ENCODE measurements at regions of chr19 and their contacts with region 1.

Region 1: DNA sequence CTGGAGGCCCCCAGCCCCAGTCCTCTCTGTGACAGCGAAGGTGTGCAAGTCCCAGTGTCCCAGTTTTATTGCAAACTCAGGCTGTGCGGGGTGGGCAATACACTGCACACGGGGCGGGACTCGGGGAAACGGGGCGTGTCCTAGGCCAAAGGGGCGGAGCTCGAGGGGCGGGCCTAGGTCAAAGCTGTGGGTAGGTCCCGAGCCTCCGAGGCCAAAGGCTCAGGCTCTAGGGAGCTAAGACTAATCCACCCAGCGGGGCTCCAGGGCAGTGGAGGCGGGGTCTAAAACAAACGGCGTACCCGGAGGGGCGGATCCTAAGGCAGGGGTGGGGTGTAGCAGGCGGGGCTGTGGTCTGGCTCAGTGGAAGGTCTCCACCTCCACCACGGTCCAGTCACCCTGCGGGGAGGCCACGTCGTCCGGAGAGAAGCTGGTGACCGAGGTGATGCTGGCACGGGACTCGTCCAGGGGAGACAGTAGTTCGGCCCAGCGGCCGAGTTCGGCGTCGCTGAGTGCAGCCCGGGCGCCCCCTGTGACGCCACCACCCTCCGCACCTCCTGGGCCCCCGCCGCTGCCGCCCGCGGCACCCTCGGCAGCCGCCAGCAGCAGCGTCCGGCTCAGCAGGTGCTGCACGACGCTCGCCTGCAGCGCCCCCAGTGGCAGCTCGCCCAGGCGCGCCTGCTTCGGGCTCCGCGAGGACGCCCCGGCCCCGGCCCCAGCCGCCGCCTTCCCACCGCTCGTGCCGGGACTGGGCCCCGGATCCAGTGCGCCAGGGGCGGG is 5.3 kb downstream of the PRR36 start:
- DNase-seq: peak; percentile 70 to 96 (median 82)
- ATAC-seq: peak; percentile 74 to 85 (median 83)
- H3K4me3 ChIP-seq: peak overlapping the region; percentile 58 to 59
- H3K4me3 Mint-ChIP-seq: peak overlapping the region; percentile 75 to 80 (median 76)
- H3K27ac ChIP-seq: peak overlapping the region; percentile 76
- H3K27ac Mint-ChIP-seq: peak overlapping the region; percentile 23 to 88
- H3K4me1 ChIP-seq: peaks cover 3 to 65% of the 10 kb centered on the region in 2 experiments
- H3K4me1 Mint-ChIP-seq: peaks cover 35 to 48% (median 37%) of the 10 kb centered on the region in 3 donors
- H3K27me3 ChIP-seq: peaks cover 0 to 75% of the 10 kb centered on the region in 2 experiments
- H3K27me3 Mint-ChIP-seq: peaks cover 17 to 24% of the 10 kb centered on the region in 2 donors

Region 2: DNA sequence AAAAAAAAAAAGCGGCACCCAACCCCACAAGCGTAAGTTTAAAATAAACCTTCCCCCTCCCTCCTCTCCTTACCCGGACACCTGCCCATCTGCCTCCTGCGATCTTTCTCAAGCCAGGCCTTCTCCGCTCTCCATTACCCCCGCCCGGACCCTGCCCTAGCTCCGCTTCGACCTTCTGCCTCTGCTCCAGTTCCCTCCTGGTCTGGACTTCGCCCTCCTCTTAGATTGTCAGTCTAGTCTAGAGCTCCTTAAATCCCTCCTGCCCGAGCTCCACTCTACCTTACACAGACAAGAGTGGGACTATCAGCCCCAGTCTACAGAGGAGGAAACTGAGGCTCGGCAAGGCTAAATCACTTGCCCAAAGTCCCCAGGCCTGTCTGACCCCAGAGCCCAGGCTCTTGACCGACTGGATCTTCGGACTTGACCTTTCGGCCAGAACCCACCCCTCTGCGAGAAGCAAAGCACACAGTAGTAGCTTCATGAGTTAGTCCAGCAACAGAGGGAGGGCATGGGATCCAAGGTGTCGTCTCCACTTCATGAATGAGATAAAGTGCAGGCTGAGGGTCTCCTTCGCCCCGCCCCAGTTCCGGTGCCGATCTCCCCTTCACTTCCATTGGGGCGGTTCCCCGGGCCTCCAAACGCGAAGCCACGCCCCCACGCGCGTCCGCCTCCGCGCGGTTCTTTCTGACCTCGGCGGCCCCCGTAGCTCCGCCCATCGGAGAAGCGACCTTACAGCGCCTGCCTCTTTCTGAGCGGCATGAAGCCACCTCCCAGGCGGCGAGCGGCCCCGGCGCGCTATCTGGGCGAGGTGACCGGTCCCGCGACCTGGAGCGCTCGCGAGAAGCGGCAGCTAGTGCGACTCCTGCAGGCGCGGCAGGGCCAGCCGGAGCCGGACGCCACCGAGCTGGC is 51.0 kb after region 1 on chr19 and contains the start of gene SNAPC2:
- CTCF ChIA-PET with region 1: interaction called in 1 of 2 experiments, 32 read pairs
- POLR2A ChIA-PET with region 1: interaction called in 1 of 2 experiments, 5 read pairs
- DNase-seq: peak; percentile 91 to 98 (median 96)
- ATAC-seq: peak; percentile 69 to 71 (median 70)
- H3K4me3 ChIP-seq: peak within 1 kb of the TSS; percentile 57
- H3K4me3 Mint-ChIP-seq: peak within 1 kb of the TSS; percentile 86 to 94 (median 88)
- H3K27ac ChIP-seq: peak within 1 kb of the TSS; percentile 72
- H3K27ac Mint-ChIP-seq: peak within 1 kb of the TSS; percentile 91 to 94
- H3K4me1 ChIP-seq: peaks cover 17 to 68% of the 10 kb centered on the region in 2 experiments
- H3K4me1 Mint-ChIP-seq: peaks cover 29 to 53% (median 35%) of the 10 kb centered on the region in 3 donors
- H3K27me3 ChIP-seq: peaks cover 3 to 45% of the 10 kb centered on the region in 2 experiments
- H3K27me3 Mint-ChIP-seq: peaks cover 10 to 31% of the 10 kb centered on the region in 2 donors
- total RNA-seq, gene SNAPC2: 9.0 to 22.9 (median 18.6) TPM

Measured in T-cell (primary cell).